ENCODE measurements at regions of chr7 and their contacts with region 1.

Region 1: DNA sequence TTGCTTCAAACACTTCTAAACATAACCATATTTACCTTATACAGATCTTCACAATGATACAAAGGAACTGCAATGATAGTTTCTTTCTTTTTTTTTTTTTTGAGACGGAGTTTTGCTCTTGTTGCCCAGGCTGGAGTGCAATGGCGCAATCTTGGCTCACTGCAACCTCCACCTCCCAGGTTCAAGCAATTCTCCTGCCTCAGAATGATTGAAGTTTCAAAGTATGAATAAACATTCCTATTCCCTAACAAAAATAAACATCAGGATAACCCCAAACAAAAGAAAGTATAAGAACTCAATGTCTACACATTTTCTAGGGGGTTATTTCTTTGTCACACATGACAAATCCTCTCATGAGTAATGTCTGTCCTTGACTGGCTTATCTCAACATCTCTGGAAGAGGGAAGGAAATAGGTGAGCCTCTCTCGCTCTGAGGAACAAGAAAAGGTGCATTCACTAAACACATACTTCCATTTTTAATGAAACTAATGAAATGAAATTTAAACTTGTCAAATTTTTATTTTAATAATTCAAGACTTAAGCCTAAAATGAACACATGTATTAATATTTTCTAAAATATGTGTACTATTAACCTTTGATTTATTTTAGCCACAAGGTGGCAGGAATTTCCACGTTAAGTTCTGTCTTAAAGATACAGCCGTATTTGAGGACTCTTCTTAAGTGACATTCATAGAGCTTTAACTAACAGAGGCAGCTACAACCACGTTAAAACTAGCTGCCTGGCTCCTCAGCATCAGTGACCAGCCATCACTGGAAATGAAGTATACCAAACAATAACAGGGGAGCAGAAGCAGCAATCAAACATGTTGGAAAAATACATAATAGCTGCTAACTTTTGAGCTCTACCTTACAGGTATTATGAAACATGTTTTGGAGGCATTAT is 58.3 kb downstream of the MALSU1 start:
- DNase-seq: no peak
- H3K4me3 Mint-ChIP-seq: no peak overlapping the region
- H3K27ac Mint-ChIP-seq: no peak overlapping the region
- H3K4me1 Mint-ChIP-seq: peaks cover 22% of the 10 kb centered on the region
- H3K27me3 Mint-ChIP-seq: peaks cover 50% of the 10 kb centered on the region

Region 2: DNA sequence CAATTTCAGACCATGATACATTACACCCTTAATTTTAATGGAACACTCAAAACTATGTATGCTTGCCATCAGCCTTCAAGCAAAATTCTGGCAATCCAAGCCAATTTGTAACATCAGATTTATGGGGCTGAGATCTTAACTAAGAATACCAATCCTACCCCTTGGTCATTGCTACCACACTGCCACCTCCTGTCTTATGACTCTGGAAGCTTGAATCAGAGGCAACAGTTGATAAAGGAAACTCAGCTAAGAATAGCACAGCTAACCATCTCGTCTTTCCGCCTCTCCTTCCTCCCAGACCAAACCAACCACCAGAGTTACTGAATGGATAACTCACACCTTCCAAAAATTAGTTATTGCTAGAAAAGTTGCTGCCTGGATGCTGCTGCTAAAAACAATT is 105.4 kb after region 1 on chr7:
- CTCF ChIA-PET with region 1: interaction called, 35 read pairs
- DNase-seq: peak; percentile 25
- H3K4me3 Mint-ChIP-seq: no peak overlapping the region
- H3K27ac Mint-ChIP-seq: no peak overlapping the region
- H3K4me1 Mint-ChIP-seq: peaks cover 17% of the 10 kb centered on the region
- H3K27me3 Mint-ChIP-seq: peaks cover 66% of the 10 kb centered on the region

Region 3: DNA sequence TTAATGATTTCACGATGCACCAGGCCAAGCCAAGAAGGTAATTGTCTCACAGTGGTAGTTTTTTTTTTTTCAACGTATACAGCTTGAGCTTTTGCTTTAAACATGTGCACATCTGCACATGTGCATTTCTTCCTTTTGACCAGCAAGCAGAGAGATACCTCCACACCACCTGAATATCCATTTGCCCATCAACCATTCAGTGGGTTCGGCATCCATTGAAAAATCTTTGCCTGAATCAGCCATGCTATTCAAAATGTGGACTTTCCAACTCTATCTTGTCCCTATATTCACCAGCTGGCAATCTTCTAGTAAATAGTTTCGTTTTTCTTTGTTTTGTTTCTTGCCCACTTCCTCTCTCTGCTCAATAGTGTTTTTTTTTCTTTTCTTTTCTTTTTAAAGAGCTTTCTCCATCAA is 182.1 kb after region 1 on chr7:
- CTCF ChIA-PET with region 1: interaction called, 10 read pairs
- DNase-seq: no peak
- H3K4me3 Mint-ChIP-seq: peak overlapping the region; percentile 55
- H3K27ac Mint-ChIP-seq: peak overlapping the region; percentile 94
- H3K4me1 Mint-ChIP-seq: peaks cover 17% of the 10 kb centered on the region
- H3K27me3 Mint-ChIP-seq: no peaks in the 10 kb centered on the region

Region 4: DNA sequence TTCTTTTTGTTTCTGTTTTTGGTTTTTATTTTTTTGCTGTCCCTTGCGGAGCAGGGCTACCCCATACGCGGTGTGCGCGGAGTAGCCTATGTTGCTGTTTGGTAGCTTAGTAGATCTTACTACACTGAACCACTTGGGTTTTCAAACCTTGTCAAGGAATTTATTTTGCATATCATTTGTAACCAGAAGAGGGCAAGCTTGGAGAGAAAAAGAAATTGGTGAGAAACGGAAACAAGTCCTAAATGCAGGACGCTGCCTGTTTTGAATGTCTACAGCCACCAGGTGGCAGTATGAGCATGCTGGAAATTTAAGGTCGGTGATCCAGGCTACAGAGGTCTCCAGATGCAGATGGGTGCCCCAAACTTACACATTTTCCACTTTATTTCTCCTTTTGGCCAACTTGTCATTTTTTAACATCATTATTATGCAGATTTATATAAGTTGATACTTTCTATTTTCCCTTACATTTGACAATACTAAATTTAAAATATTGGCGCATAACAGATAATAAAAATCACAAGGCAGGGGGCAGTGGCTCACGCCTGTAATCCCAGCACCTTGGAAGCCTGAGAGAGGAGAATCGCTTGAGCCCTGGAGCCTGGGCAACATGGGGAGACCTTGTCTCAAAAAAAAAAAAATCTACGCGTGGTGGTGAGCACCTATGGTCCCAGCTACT is 189.6 kb after region 1 on chr7:
- CTCF ChIA-PET with region 1: interaction called, 15 read pairs
- DNase-seq: peak; percentile 84
- H3K4me3 Mint-ChIP-seq: no peak overlapping the region
- H3K27ac Mint-ChIP-seq: no peak overlapping the region
- H3K4me1 Mint-ChIP-seq: peaks cover 9% of the 10 kb centered on the region
- H3K27me3 Mint-ChIP-seq: peaks cover 8% of the 10 kb centered on the region

Measured in activated naive CD4-positive, alpha-beta T cell treated with anti-CD3 and anti-CD28 coated beads, Interleukin-2, amount 10 ng/mL, durations not matched to agents 7 days and 5 days (primary cell).